GM18951 (cell line): ENCODE measurements at regions of chr5 and their contacts with region 1.

Region 1: GRCh38 chr5:3896098-3896497 is 300.5 kb downstream of the IRX1 start:
- POLR2A ChIP-seq: no peak

Region 2: DNA sequence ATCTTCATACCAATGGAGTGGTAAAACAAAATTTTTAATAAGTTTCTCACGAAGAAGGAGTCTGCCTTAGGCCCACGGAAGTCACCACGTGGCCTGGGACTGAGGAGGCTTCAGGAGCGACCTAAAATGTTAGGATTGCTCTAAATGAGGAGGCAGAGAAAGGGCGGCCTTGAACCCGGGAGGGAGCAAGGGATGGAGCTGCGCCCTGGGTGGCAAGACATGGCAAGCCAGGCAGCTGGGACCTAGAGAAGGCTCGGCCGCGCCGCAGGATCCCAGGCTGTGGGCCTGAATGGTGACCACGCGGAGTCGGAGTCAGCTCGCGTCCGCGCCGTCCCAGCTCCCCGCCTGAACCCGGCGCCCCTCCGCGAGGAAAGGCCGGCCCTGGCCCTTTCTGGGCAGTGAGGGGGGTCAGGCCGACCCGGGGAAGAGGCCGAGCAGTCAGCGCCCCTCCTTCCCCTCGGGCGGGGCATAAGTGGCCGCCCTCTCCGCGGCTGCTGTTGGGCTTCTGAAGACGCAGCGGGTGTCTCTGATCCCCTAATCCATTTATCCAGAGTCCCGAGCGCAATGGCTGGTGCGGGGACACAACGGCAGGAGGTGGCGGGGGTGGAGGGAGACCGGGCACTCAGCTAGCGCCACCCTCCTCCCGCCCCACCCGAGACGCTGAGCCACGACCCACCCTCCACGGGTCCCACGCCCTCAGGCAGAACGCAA is 289.8 kb before region 1 on chr5:
- in situ Hi-C with region 1: loop called (anchors 5 kb)
- POLR2A ChIP-seq: no peak